ENCODE measurements at regions of chr22 and their contacts with region 1.

Region 1: GRCh38 chr22:37021710-37022482 is 2.4 kb downstream of the MPST start:
- DNase-seq: no peak
- H3K4me3 ChIP-seq: no peak overlapping the region
- H3K27me3 ChIP-seq: no peaks in the 10 kb centered on the region
- CTCF ChIP-seq: peak; percentile 84

Region 2: DNA sequence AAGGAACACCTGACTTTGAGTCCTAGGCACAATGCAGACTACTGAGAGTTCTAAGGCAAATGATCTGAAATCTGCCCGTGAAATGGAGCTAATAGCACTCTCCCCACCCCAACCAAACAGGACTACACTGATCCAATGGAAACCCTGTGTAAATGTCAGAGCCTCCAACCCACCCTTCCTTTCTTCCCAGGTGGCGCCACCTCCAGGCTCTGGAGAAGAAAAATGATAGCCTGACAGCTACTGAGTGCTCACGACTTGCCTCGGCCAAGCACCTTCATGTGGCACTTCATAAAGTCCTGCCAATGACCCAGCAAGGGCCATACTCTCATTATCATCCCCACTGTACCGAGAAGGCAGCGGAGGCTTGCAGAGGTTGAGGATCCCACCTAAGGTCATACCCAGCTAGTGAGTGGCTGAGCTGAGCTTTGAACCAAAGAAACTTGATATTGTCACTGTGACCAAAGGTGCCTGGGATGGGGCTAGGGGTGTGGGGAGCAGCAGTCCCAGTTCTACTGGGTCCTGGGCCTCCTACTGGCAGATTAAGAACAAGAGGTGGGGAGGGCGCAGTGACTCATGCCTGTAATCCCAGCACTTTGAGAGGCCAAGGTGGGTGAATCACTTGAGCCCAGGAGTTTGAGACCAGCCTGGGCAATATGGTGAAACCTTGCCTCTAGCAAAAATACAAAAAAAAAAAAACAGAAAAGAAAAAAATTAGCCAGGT is 23.1 kb before region 1 on chr22:
- CTCF ChIA-PET with region 1: interaction called, 10 read pairs
- POLR2A ChIA-PET with region 1: no interaction called
- DNase-seq: no peak
- H3K4me3 ChIP-seq: no peak overlapping the region
- H3K27me3 ChIP-seq: peaks cover 15% of the 10 kb centered on the region
- CTCF ChIP-seq: no peak

Region 3: GRCh38 chr22:37032546-37033460 is 10.9 kb after region 1 on chr22:
- CTCF ChIA-PET with region 1: interaction called, 13 read pairs
- POLR2A ChIA-PET with region 1: interaction called, 4 read pairs
- DNase-seq: no peak
- H3K4me3 ChIP-seq: no peak overlapping the region
- H3K27me3 ChIP-seq: peaks cover 6% of the 10 kb centered on the region
- CTCF ChIP-seq: no peak

Region 4: DNA sequence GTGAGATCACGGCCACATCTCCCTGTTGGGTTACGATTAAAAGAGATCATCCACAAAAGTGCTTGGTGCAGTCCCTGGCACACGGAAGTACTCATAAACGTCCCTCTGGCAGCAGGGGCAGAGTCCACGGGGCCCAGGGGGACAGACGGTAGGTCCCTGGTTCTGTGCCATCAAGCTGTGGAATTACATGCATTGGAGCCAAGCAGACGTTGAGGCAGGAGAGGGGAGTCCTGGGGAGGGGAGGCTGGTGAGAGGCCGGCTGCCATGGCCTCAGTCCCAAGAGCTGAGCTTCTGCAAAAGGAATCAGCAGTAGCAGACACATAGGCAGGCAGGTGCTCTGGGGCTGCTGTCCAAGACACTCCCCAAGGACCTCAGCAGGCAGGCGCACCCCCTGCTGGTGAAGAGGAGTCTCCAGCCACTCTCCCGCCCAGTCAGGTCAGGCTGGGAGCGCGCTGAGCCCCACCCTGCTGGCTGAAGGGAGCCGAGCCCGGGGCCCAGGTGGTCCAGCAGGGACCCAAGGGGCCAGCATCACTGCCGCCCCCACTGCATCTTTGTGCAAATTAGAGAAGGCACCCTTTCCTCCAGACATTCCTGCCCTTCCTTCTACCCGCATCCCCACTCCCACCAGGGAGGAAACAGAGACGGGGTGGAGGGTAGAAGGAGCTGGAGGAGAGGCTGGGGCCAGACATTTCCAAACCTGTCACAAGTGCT is 22.1 kb after region 1 on chr22:
- CTCF ChIA-PET with region 1: interaction called, 11 read pairs
- POLR2A ChIA-PET with region 1: no interaction called
- DNase-seq: no peak
- H3K4me3 ChIP-seq: no peak overlapping the region
- H3K27me3 ChIP-seq: no peaks in the 10 kb centered on the region
- CTCF ChIP-seq: peak; percentile 63

Measured in BJ (cell line).